Mammary epithelial cell (primary cell): ENCODE measurements at regions of chr9 and their contacts with region 1.

Region 1: GRCh38 chr9:137590462-137591383 is at the start of gene ZMYND19:
- DNase-seq: peak; percentile 83
- H3K4me3 ChIP-seq: peak within 1 kb of the TSS; percentile 76 to 97 (median 84)
- H3K27ac ChIP-seq: peak within 1 kb of the TSS; percentile 58
- H3K4me1 ChIP-seq: peaks cover 15% of the 10 kb centered on the region
- H3K27me3 ChIP-seq: no peaks in the 10 kb centered on the region
- CTCF ChIP-seq: no peak
- total RNA-seq, gene ZMYND19: 10.2 to 48.0 TPM

Region 2: DNA sequence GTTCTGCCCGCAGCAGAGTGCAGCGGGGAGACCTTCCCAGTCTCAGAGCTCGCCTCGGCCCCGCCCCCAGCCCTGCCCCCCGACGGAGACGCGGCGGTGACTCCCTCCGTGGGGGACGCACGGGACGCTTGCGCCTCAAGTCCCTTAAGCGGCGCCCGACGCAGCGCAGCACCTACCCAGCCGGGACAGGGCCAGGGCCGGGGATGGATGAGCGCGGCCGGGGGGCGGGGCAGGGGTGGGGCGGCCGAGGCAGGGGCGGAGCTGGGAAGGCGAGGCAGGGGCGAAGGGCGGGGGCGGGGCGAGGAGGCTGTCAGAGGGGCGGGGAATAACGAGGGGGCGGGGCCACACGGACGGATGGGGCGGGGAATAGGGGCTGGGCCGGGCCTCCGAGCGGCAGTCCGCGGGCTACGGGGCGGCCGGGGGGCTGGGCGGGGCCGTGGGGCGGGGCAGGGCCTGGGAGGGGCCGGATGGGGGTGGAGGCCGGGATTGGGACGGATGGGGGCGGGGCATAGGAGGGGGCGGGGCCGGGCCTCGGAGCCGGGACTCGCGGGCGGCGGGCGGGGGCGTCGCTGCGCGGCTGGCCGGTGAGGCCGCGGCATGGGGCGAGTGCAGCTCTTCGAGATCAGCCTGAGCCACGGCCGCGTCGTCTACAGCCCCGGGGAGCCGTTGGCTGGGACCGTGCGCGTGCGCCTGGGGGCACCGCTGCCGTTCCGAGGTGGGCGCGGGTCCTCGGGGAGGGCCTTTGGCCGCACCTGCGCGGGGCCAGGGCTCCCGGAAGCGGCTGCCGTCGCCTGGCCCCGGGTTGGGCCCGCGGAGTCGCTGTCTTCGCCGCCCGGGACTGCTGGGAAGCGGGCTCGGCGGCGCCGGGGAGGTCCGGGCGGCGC is 14.6 kb after region 1 on chr9 and contains the start of gene ARRDC1:
- CTCF ChIA-PET with region 1: no interaction called
- dilution Hi-C with region 1: no loop called
- in situ Hi-C with region 1: no loop called
- intact Hi-C with region 1: loop called (anchors 1 kb)
- DNase-seq: peak; percentile 81
- H3K4me3 ChIP-seq: peak within 1 kb of the TSS; percentile 56 to 81 (median 71)
- H3K27ac ChIP-seq: peak within 1 kb of the TSS; percentile 53
- H3K4me1 ChIP-seq: peaks cover 23% of the 10 kb centered on the region
- H3K27me3 ChIP-seq: no peaks in the 10 kb centered on the region
- CTCF ChIP-seq: no peak
- total RNA-seq, gene ARRDC1: 35.0 to 153 TPM

Region 3: DNA sequence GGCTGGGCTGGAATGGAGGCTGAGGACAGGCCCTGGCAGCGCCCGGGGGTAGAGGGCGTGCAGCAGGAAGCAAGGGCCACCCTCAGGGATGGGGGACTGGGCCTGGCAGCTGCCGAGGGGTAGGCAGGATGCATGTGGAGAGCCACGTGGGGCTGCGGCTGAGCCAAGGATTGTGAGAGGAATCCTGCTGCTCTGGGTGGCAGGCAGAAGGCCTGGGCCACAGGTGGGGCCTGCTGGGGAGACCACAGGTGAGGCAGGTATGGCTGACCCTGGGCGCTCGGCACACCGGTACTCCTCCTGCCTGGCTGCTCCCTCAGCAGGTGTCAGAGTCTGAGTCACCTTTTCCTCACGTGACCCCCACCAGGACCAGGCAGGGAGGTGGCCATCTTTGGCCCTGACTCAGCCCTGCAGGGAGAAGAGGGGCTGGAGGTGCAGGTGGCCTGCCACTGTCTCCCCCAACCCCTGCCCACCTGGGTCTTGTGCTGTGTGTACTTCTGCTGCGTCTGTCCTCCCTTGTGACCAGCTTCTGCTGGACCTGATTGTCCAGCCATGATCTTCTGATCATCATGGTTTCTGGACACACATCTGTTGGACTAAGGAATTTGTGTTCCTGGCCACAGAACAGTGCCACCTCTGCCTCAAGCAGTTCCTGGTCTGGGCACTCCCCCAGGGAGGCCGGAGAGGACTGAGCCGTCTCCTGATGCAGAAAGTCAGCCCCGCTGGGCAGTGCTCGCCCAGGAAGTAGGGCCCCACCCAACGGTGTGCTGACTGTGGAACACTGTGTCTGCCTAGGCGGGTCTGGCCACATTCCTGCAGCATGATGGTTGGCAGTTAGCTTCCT is 21.1 kb after region 1 on chr9:
- CTCF ChIA-PET with region 1: no interaction called
- dilution Hi-C with region 1: no loop called
- in situ Hi-C with region 1: no loop called
- intact Hi-C with region 1: loop called (anchors 2 kb)
- DNase-seq: peak; percentile 97
- H3K4me3 ChIP-seq: peak overlapping the region in 2 of 3 experiments; percentile 8 to 23
- H3K27ac ChIP-seq: peak overlapping the region; percentile 76
- H3K4me1 ChIP-seq: peaks cover 55% of the 10 kb centered on the region
- H3K27me3 ChIP-seq: no peaks in the 10 kb centered on the region
- CTCF ChIP-seq: peak in 1 of 2 donors; percentile 3

Region 4: GRCh38 chr9:137618105-137619067 is 27.7 kb after region 1 on chr9 and contains the start of gene EHMT1:
- CTCF ChIA-PET with region 1: no interaction called
- dilution Hi-C with region 1: no loop called
- in situ Hi-C with region 1: no loop called
- intact Hi-C with region 1: loop called (anchors 1 kb)
- DNase-seq: peak; percentile 76
- H3K4me3 ChIP-seq: peak within 1 kb of the TSS; percentile 87 to 95 (median 88)
- H3K27ac ChIP-seq: peak within 1 kb of the TSS; percentile 75
- H3K4me1 ChIP-seq: peaks cover 27% of the 10 kb centered on the region
- H3K27me3 ChIP-seq: no peaks in the 10 kb centered on the region
- CTCF ChIP-seq: peak in 1 of 2 donors; percentile 10
- total RNA-seq, gene EHMT1: 55.0 to 83.4 TPM